Adrenal gland (tissue), 19 donors: ENCODE measurements at regions of chr22 and their contacts with region 1.

Region 1: DNA sequence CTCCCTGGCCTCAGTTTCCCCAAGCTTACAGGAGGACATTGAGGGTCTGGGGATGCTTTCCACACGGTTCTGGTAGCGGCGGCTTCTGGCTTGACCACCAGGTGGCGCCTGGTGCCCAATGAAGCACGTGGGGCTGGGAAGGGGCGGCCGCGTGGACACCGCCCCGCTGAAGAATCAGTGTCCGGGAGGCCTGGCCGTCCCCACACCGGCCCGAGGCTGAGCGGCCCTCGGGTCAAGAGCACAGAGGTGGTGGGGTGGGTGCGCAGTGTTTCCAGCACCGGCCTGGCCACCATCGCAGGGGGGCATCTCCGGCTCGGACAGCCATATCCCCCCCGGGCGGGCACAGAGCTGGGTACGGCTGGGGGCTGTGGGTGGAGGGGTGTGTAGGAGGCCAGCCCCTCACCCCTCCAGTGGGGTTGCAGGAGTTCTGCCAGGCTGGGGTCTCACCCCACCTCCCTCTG is 27.8 kb upstream of the PPARA start:
- DNase-seq: peak; percentile 66 to 89 (median 81)
- H3K4me3 ChIP-seq: no peak overlapping the region
- H3K27ac ChIP-seq: no peak overlapping the region
- H3K4me1 ChIP-seq: peaks cover 5 to 18% of the 10 kb centered on the region in 2 donors
- H3K27me3 ChIP-seq: no peaks in the 10 kb centered on the region
- CTCF ChIP-seq: peak; percentile 92 to 97 (median 94)
- POLR2A ChIP-seq: no peak

Region 2: DNA sequence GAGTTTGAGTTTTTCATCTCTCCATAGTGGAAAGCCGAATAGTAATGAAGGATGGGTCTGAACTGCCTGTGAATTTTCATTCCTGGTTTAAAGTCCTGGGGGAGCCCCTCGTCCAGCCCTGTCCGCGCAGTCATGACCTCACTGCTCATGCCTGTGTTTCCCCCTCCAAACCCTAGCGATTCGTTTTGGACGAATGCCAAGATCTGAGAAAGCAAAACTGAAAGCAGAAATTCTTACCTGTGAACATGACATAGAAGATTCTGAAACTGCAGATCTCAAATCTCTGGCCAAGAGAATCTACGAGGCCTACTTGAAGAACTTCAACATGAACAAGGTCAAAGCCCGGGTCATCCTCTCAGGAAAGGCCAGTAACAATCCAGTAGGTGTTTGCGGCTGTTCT is 97.1 kb after region 1 on chr22:
- intact Hi-C with region 1: no loop called
- DNase-seq: no peak
- H3K4me3 ChIP-seq: no peak overlapping the region
- H3K27ac ChIP-seq: no peak overlapping the region
- H3K4me1 ChIP-seq: peaks cover 9 to 10% of the 10 kb centered on the region in 2 donors
- H3K27me3 ChIP-seq: no peaks in the 10 kb centered on the region
- CTCF ChIP-seq: no peak
- POLR2A ChIP-seq: no peak

Region 3: GRCh38 chr22:46250035-46250782 is 127.7 kb after region 1 on chr22 and contains the start of gene CDPF1:
- intact Hi-C with region 1: loop called in 1 of 2 experiments (anchors 10 kb)
- DNase-seq: peak; percentile 87 to 94 (median 91)
- H3K4me3 ChIP-seq: peak within 1 kb of the TSS in 3 of 4 donors; percentile 69 to 83 (median 71)
- H3K27ac ChIP-seq: peak within 1 kb of the TSS; percentile 54 to 91 (median 83)
- H3K4me1 ChIP-seq: peaks cover 7 to 38% of the 10 kb centered on the region in 2 donors
- H3K27me3 ChIP-seq: no peaks in the 10 kb centered on the region
- CTCF ChIP-seq: peak in 1 of 6 experiments; percentile 27
- POLR2A ChIP-seq: peak in 1 of 2 donors; percentile 91
- total RNA-seq, gene CDPF1: 10.8 to 20.4 (median 13.8) TPM

Region 4: GRCh38 chr22:46309526-46310085 is 187.1 kb after region 1 on chr22:
- intact Hi-C with region 1: loop called (anchors 2 kb)
- DNase-seq: no peak
- H3K4me3 ChIP-seq: no peak overlapping the region
- H3K27ac ChIP-seq: no peak overlapping the region
- H3K4me1 ChIP-seq: no peaks in the 10 kb centered on the region
- H3K27me3 ChIP-seq: no peaks in the 10 kb centered on the region
- CTCF ChIP-seq: no peak
- POLR2A ChIP-seq: no peak

Region 5: DNA sequence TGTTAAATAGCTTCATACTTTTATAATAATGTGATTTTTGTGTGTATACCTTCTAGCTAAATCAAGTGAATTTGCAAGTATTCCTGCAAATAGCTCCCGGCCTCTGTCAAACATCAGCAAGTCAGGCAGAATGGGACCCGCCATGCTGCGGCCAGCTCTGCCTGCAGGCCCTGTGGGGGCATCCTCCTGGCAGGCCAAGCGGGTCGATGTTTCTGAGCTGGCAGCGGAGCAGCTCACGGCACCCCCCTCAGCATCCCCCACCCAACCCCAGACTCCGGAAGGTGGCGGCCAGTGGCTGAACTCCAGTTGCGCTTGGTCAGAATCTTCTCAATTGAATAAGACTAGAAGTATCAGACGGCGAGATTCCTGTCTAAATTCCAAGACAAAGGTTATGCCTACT is 193.4 kb after region 1 on chr22:
- intact Hi-C with region 1: loop called (anchors 2 kb)
- DNase-seq: no peak
- H3K4me3 ChIP-seq: no peak overlapping the region
- H3K27ac ChIP-seq: no peak overlapping the region
- H3K4me1 ChIP-seq: no peaks in the 10 kb centered on the region
- H3K27me3 ChIP-seq: no peaks in the 10 kb centered on the region
- CTCF ChIP-seq: no peak
- POLR2A ChIP-seq: no peak